Posterior cingulate gyrus (tissue), 11 donors: ENCODE measurements at regions of chr3 and their contacts with region 1.

Region 1: DNA sequence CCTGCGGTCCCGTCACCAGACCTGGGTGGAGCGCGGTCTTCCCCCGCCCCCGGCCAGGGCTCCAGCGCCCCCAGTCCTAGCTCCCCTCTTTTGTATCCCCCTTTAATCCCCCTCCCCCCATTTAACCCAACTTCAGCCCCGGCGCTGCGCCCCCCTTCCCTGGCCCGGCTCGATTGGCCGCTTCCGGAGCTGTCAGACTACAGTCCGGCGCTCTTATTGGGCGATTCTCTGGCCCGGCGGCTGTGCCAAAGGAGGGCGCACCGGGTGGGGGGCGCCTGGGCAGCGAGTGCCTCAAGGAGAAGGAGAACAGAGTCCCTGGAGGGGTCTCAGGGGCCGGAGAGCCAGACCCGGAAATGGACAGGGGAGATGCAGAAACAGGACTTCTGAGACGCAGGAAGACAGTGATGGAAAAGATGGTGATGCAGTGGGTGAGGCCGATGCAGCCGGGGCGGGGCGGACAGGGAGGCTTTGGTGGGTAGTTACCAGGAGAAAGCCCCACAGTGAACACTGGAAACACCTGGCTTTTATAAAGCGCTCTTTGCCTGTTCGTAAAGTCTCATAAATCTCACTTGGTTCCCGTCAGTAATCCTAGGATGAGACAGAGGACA is 1.2 kb upstream of the ADCY5 start:
- DNase-seq: peak; percentile 64 to 96 (median 76)

Region 2: GRCh38 chr3:123328851-123329635 is 121.1 kb before region 1 on chr3:
- intact Hi-C with region 1: loop called (anchors 1 kb)
- DNase-seq: peak; percentile 66 to 97 (median 88)

Region 3: GRCh38 chr3:123347684-123348264 is 102.3 kb before region 1 on chr3:
- intact Hi-C with region 1: loop called (anchors 1 kb)
- DNase-seq: peak in 1 of 10 donors; percentile 45

Region 4: GRCh38 chr3:123412811-123413604 is 37.1 kb before region 1 on chr3:
- intact Hi-C with region 1: loop called (anchors 5 kb)
- DNase-seq: peak in 9 of 10 donors; percentile 44 to 96 (median 69)

Region 5: GRCh38 chr3:123489400-123490004 is 39.4 kb after region 1 on chr3:
- intact Hi-C with region 1: loop called (anchors 5 kb)
- DNase-seq: peak; percentile 59 to 97 (median 82)